ENCODE measurements at regions of chr7 and their contacts with region 1.

Region 1: DNA sequence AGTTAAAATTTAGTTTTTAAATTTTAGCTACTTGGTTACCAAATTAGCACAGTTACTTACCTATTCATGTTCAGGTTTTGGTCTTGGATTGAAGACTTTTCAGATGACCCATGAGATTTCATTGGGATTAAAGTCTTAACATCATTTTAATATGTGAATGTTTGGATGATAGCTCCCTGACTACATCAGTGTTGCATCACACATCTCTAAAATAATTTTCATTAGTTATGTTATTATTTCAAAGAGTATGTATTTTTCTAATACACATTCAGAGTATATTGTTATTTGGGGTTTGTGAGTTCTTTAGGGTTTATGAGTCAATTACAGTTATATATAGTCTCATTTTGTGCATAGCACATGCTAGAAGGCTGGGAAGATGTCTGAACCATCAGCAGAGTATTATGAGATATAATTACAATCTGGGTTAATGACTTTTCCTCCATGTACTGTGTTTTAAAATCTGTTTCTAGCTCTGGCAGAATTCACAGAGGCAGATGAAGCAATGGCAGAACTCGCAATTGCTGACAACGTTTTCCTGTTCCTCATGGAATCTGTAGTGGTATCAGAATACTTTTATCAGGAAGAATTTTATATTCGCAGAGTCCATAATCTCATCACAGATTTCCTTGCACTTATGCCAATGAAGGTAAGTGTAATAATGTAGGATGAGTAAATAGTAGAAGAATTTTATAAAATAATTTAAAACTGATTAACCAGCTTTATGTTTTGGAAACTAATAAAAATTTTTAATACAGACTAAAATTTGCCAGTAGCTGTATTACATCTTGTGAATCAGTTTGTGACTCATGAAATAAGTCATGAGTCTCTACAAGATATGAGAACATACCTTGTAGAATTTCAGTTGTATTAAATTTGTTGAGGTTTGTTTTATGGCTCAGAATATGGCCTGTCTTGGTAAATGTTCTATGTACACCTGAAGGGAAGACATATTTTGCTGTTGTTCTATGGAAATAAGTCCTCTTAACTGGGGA is 26.9 kb downstream of the NUP205 start:
- DNase-seq: no peak
- ATAC-seq: no peak
- H3K4me3 ChIP-seq: no peak overlapping the region
- H3K4me3 Mint-ChIP-seq: no peak overlapping the region
- H3K27ac ChIP-seq: no peak overlapping the region
- H3K27ac Mint-ChIP-seq: no peak overlapping the region
- H3K4me1 ChIP-seq: no peaks in the 10 kb centered on the region
- H3K4me1 Mint-ChIP-seq: no peaks in the 10 kb centered on the region
- H3K27me3 ChIP-seq: no peaks in the 10 kb centered on the region
- H3K27me3 Mint-ChIP-seq: no peaks in the 10 kb centered on the region
- CTCF ChIP-seq: no peak

Region 2: DNA sequence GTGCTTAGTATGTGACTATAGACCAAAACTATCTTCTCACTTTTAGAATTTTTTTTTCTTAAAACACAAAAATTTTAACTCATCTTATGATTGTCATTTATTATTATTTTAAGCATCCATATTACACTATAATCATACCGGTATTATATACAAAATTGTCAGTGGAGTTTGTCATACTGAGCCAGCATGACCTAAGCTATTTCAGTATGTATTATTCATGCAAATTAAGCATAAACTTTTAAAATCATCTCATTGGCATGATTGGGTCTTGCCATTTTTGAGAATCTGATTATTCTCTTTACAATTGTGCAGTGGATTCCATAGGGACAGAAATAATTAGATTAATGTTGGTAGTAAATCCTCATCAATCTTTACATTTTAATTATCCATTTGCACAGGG is 31.5 kb after region 1 on chr7:
- CTCF ChIA-PET with region 1: no interaction called
- POLR2A ChIA-PET with region 1: no interaction called
- intact Hi-C with region 1: loop called in 1 of 2 experiments (anchors 5 kb)
- DNase-seq: no peak
- ATAC-seq: no peak
- H3K4me3 ChIP-seq: no peak overlapping the region
- H3K4me3 Mint-ChIP-seq: no peak overlapping the region
- H3K27ac ChIP-seq: no peak overlapping the region
- H3K27ac Mint-ChIP-seq: no peak overlapping the region
- H3K4me1 ChIP-seq: no peaks in the 10 kb centered on the region
- H3K4me1 Mint-ChIP-seq: no peaks in the 10 kb centered on the region
- H3K27me3 ChIP-seq: no peaks in the 10 kb centered on the region
- H3K27me3 Mint-ChIP-seq: no peaks in the 10 kb centered on the region
- CTCF ChIP-seq: no peak